Heart left ventricle (tissue), 16 donors: ENCODE measurements at regions of chr22 and their contacts with region 1.

Region 1: DNA sequence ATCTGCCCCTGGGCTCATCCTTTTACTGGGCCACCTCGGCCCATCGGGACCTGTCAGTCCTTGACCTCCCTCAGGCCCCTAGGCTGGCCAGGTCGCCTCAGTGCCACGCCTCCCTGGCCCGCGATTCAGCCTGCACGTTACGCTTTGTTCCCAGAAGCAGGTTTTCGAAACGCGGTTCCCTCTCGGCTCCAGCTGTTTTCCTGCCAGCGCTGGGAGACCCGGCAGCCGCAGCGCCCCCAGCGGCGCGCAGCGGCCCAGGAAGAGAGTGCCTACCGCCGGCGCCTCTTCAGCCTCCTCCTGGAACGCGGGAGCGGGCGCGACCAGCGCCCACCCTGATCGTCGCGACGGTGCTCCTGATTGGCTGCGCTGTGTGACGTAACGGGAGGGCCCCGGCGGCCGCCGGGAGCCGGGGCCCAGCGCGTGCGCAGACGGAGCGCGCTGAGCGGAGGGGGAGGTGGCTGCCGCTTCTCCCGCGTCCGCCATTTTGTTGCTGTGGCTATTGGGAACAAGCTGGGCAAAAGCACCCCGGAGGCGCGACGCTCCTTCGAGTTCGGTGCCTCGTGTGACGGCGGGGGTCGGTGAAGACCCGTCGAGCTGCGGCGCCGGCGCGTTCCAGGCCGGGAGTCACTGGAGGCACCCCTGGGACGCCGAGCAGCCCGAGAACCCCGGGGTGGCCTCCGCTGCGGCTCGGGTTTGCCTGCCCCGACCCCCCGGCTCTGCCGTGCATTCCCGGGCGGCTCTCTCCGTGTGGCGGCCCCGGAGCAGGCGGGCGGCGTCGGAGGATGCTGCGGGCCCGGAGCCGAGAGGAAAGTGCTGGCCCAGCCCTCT is at the start of gene CRKL:
- DNase-seq: peak; percentile 97 to 99 (median 98)
- ATAC-seq: peak; percentile 99 to 100 (median 100)
- H3K4me3 ChIP-seq: peak within 1 kb of the TSS; percentile 62 to 99 (median 89)
- H3K27ac ChIP-seq: peak within 1 kb of the TSS; percentile 78 to 98 (median 94)
- H3K4me1 ChIP-seq: peaks cover 0 to 41% (median 24%) of the 10 kb centered on the region in 12 donors
- H3K27me3 ChIP-seq: no peaks in the 10 kb centered on the region
- CTCF ChIP-seq: peak; percentile 84 to 100 (median 95)
- POLR2A ChIP-seq: peak; percentile 66 to 92
- total RNA-seq, gene CRKL: 45.6 to 64.2 (median 53.2) TPM

Region 2: DNA sequence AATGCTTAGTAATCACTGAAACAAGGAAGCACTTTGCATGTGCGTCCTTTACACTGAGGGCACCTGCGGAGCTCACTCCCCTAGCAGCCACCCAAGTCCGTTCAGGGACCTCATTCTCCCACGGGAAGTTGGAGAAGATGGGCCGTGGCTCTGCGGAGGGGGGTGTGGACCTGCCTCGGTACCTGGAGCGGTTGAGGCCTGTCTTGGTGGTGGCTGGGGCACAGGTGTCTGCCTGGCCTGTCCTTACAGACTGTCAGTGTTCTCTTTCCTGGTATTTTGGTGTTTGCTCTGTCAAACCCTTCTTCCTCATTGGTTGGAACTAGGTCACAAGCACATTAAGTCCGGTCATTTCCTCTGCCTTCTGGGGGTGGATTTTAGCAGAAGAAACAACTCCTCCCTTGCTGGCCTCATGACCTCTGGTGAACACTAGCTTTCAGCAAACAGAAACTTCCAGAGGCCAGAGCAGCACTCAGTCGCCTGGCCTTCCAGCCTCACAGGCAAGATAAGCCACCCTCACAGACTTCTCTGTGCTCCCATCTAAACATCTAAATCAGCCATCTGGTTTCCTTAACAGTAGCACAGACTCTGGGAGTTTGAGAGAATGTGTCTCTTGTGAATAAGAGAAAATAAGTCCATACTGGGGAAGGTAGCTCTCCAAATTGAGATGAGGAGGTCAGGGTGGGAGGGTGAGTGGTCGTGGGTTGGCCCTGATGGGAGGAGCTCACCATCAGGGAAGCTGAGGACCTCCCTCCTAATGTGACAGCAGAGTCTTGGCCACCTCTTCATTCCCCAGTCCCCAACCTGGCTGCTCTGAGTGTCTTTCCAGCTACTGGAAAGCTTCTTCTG is 49.8 kb before region 1 on chr22:
- intact Hi-C with region 1: loop called in 1 of 10 experiments (anchors 10 kb)
- DNase-seq: peak in 4 of 5 donors; percentile 66 to 71 (median 70)
- ATAC-seq: peak; percentile 77 to 96 (median 89)
- H3K4me3 ChIP-seq: peak overlapping the region in 8 of 12 donors; percentile 8 to 42 (median 26)
- H3K27ac ChIP-seq: peak overlapping the region; percentile 65 to 91 (median 84)
- H3K4me1 ChIP-seq: peaks cover 0 to 60% (median 29%) of the 10 kb centered on the region in 12 donors
- H3K27me3 ChIP-seq: no peaks in the 10 kb centered on the region
- CTCF ChIP-seq: no peak
- POLR2A ChIP-seq: peak in 1 of 2 donors; percentile 52

Region 3: DNA sequence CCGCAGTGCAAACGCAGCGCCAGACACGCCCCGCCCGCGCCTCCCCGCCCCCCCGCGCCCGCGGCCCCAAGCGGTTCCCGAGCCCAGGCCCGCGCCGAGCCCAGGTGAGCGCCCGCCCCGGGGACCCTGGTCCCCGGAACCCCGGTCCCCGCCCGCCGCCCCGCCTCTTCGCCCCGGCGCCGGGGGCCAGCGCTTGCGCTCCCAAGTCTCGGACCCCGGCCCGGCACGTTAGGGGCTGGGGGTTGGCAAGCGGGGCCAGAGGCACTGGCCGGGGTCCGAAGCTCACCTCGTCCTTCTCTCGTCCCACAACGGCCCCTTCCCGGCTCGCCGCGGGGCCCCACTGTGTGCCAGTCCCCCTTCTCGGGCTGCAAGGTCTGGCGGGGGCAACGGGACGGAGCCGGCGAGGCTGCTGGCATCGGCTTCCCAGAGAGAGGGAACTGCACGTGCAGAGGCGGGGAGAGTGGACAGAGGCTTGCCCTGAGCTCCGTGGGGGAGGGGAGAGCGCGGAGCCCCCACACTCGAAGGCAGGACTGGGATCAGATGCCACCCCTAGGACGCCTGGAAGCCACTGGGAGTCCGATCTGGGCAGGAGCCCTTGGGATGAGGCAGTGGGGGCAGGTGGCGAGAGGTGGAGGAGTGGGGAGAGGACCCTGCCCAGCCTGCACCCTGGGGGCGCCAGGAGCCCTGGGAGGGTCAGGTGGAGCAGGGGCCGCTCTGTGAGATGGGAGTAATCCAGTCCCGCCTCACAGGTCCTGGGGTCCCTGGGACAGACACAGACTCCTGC is 48.1 kb after region 1 on chr22:
- intact Hi-C with region 1: loop called in 2 of 10 experiments (anchors 5 to 10 kb)
- DNase-seq: peak in 1 of 5 donors; percentile 62
- ATAC-seq: no peak
- H3K4me3 ChIP-seq: peak overlapping the region in 11 of 12 donors; percentile 17 to 55 (median 43)
- H3K27ac ChIP-seq: no peak overlapping the region
- H3K4me1 ChIP-seq: peaks cover 0 to 21% (median 5%) of the 10 kb centered on the region in 12 donors
- H3K27me3 ChIP-seq: peaks cover 0 to 29% (median 11%) of the 10 kb centered on the region in 9 donors
- CTCF ChIP-seq: no peak
- POLR2A ChIP-seq: no peak

Region 4: GRCh38 chr22:20989323-20990138 is 72.3 kb after region 1 on chr22:
- intact Hi-C with region 1: loop called in 2 of 10 experiments (anchors 10 kb)
- DNase-seq: no peak
- ATAC-seq: no peak
- H3K4me3 ChIP-seq: no peak overlapping the region
- H3K27ac ChIP-seq: no peak overlapping the region
- H3K4me1 ChIP-seq: no peaks in the 10 kb centered on the region
- H3K27me3 ChIP-seq: no peaks in the 10 kb centered on the region
- CTCF ChIP-seq: no peak
- POLR2A ChIP-seq: no peak